IMR-90 (cell line): ENCODE measurements at regions of chr16 and their contacts with region 1.

Region 1: GRCh38 chr16:53549970-53550690 is 47.1 kb upstream of the AKTIP start:
- DNase-seq: peak; percentile 82
- ATAC-seq: peak; percentile 95
- H3K4me3 ChIP-seq: no peak overlapping the region
- H3K27ac ChIP-seq: no peak overlapping the region
- H3K4me1 ChIP-seq: no peaks in the 10 kb centered on the region; the same call in 1 of the 2 replicates
- H3K27me3 ChIP-seq: peaks cover 46% of the 10 kb centered on the region
- CTCF ChIP-seq: peak; percentile 92
- POLR2A ChIP-seq: 0 out of 2 replicates have a peak, but pooled peaks have one; percentile 33
- RAD21 ChIP-seq: peak; percentile 92

Region 2: DNA sequence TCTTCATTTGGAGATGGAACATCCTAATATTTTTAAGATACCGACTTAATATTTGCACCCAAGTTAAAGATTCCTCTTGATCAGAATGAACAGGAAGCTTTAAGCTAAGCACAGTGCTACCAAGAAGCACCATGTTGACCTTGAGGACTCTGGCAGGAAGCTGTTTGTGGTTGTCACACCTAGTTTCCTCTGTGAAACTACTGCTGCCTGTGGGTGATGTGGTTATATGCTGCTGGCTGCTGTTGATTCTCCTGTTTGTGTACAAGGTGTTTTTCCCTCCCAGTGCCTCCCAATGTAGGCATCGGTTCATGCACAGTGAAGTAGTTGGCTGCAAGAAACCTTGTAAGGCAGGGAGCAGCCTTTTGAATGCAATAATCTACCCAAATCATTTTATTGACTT is 92.5 kb before region 1 on chr16:
- CTCF ChIA-PET with region 1: no interaction called
- POLR2A ChIA-PET with region 1: no interaction called
- dilution Hi-C with region 1: no loop called
- in situ Hi-C with region 1: no loop called
- intact Hi-C with region 1: no loop called
- DNase-seq: no peak
- ATAC-seq: no peak
- H3K4me3 ChIP-seq: no peak overlapping the region
- H3K27ac ChIP-seq: no peak overlapping the region
- H3K4me1 ChIP-seq: no peaks in the 10 kb centered on the region
- H3K27me3 ChIP-seq: no peaks in the 10 kb centered on the region
- CTCF ChIP-seq: no peak
- POLR2A ChIP-seq: no peak
- RAD21 ChIP-seq: no peak

Region 3: GRCh38 chr16:54286090-54286993 is 736.2 kb after region 1 on chr16 and contains the start of gene IRX3:
- CTCF ChIA-PET with region 1: interaction called, 3 read pairs
- POLR2A ChIA-PET with region 1: no interaction called
- dilution Hi-C with region 1: no loop called
- in situ Hi-C with region 1: loop called (anchors 10 kb)
- intact Hi-C with region 1: loop called (anchors 10 kb)
- DNase-seq: peak; percentile 4
- ATAC-seq: peak; percentile 58
- H3K4me3 ChIP-seq: peak within 1 kb of the TSS; percentile 71
- H3K27ac ChIP-seq: no peak within 1 kb of the TSS; the same call in 1 of the 2 replicates
- H3K4me1 ChIP-seq: peaks cover 4% of the 10 kb centered on the region; the same call in 1 of the 2 replicates
- H3K27me3 ChIP-seq: peaks cover 97% of the 10 kb centered on the region
- CTCF ChIP-seq: no peak
- POLR2A ChIP-seq: no peak
- RAD21 ChIP-seq: no peak
- total RNA-seq, gene IRX3: not detected in 2 replicates

Region 4: GRCh38 chr16:54929090-54930004 is 1379.2 kb after region 1 on chr16:
- CTCF ChIA-PET with region 1: no interaction called
- POLR2A ChIA-PET with region 1: no interaction called
- dilution Hi-C with region 1: no loop called
- in situ Hi-C with region 1: no loop called
- intact Hi-C with region 1: loop called (anchors 10 kb)
- DNase-seq: peak; percentile 94
- ATAC-seq: peak; percentile 91
- H3K4me3 ChIP-seq: peak overlapping the region; percentile 53
- H3K27ac ChIP-seq: no peak overlapping the region
- H3K4me1 ChIP-seq: no peaks in the 10 kb centered on the region
- H3K27me3 ChIP-seq: peaks cover 38% of the 10 kb centered on the region
- CTCF ChIP-seq: no peak
- POLR2A ChIP-seq: no peak
- RAD21 ChIP-seq: no peak

Region 5: GRCh38 chr16:55257966-55258613 is 1708.0 kb after region 1 on chr16:
- CTCF ChIA-PET with region 1: no interaction called
- POLR2A ChIA-PET with region 1: no interaction called
- dilution Hi-C with region 1: no loop called
- in situ Hi-C with region 1: no loop called
- intact Hi-C with region 1: loop called (anchors 2 kb)
- DNase-seq: peak; percentile 26
- ATAC-seq: no peak
- H3K4me3 ChIP-seq: no peak overlapping the region
- H3K27ac ChIP-seq: no peak overlapping the region
- H3K4me1 ChIP-seq: no peaks in the 10 kb centered on the region
- H3K27me3 ChIP-seq: no peaks in the 10 kb centered on the region
- CTCF ChIP-seq: peak; percentile 58
- POLR2A ChIP-seq: no peak
- RAD21 ChIP-seq: peak; percentile 76

Region 6: DNA sequence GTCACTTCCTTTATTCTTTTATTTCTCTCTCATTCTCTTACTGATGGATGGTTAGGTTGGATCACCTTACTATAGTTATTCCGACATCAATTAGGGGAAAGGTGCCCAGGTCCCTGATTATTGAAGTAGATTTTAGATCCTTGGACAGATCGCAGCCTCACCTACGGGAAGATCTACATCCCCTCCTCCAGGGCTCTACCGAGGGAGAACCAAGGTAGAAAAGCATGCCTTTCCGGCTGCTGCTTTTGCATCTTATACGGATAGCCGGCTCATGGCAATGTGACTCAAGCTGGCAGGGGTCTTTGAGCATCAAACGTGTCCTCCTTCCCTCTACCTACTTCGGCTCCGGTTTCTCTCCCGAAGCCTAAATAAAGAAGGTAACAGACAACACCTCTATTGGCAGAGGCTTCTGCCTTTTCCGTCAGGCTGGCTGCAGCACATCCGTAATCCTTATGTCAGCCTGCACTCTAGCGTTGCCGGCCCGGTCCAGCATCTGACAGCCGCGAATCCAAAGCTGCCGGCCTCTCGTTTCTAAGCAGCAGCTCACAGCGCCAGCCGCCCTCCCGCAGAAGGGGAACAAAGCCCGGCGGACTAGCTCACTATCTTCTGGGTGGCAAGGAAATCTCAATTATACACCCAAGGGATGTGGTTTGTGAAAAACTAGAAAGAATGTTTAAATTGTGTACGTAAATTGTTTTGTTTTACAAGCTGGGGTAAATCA is 1820.8 kb after region 1 on chr16:
- CTCF ChIA-PET with region 1: no interaction called
- POLR2A ChIA-PET with region 1: no interaction called
- dilution Hi-C with region 1: no loop called
- in situ Hi-C with region 1: no loop called
- intact Hi-C with region 1: loop called (anchors 5 kb)
- DNase-seq: peak; percentile 8
- ATAC-seq: peak; percentile 81
- H3K4me3 ChIP-seq: no peak overlapping the region
- H3K27ac ChIP-seq: no peak overlapping the region
- H3K4me1 ChIP-seq: no peaks in the 10 kb centered on the region
- H3K27me3 ChIP-seq: peaks cover 19% of the 10 kb centered on the region
- CTCF ChIP-seq: peak; percentile 37
- POLR2A ChIP-seq: no peak
- RAD21 ChIP-seq: peak; percentile 43